Right lobe of liver (tissue), 6 donors: ENCODE measurements at regions of chr7 and their contacts with region 1.

Region 1: GRCh38 chr7:100059251-100059739 is 9.7 kb downstream of the ZSCAN21 start:
- DNase-seq: no peak
- ATAC-seq: no peak
- H3K4me3 ChIP-seq: no peak overlapping the region
- H3K27ac ChIP-seq: no peak overlapping the region
- H3K4me1 ChIP-seq: no peaks in the 10 kb centered on the region
- H3K27me3 ChIP-seq: no peaks in the 10 kb centered on the region
- CTCF ChIP-seq: no peak
- POLR2A ChIP-seq: no peak

Region 2: DNA sequence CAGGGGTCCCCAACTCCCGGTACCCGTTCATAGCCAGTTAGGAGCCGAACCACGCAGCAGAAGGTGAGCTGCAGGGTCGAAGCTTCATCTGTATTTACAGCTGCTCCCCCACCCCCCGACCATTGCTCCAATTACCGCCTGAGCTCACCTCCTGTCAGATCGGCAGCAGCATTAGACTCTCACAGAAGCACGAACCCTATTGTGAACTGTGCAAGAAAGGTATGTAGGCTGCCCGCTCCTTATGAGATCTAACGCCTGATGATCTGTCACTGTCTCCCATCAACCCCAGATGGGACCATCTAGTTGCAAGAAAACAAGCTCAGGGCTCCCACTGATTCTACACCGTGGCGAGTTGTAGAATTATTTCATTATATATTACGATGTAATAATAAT is 68.8 kb before region 1 on chr7:
- intact Hi-C with region 1: loop called in 1 of 2 experiments (anchors 5 kb)
- DNase-seq: peak in 1 of 3 donors; percentile 13
- ATAC-seq: peak in 3 of 4 donors; percentile 7 to 10 (median 7)
- H3K4me3 ChIP-seq: no peak overlapping the region
- H3K27ac ChIP-seq: no peak overlapping the region
- H3K4me1 ChIP-seq: peaks cover 0 to 16% (median 6%) of the 10 kb centered on the region in 4 donors
- H3K27me3 ChIP-seq: no peaks in the 10 kb centered on the region
- CTCF ChIP-seq: no peak
- POLR2A ChIP-seq: no peak

Region 3: DNA sequence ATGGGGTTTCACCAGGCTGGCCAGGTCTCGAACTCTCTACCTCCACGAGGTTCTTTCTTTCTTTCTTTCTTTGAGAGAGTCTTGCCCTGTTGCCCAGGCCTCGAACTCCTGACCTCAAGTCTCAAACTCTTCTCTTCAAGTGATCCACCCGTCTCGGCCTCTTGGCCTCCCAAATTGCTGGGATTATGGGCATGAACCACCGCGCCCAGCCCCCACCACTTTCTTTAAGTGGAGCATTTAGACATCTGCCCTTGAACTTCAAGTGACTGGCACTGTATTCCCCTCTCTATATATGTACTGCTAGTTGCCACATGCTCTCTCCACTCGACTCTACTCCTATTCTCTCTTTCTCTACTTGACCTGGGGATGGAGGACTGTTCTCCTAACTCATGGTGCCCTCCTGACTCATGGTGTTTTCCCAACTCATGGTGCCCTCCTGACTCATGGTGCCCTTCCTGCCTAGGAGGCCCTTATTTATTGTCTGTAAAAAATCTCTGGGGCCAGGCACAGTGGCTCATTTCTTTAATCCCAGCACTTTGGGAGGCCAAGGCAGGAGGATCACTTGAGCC is 855.7 kb after region 1 on chr7:
- intact Hi-C with region 1: no loop called
- DNase-seq: no peak
- ATAC-seq: peak in 1 of 4 donors; percentile 50
- H3K4me3 ChIP-seq: no peak overlapping the region
- H3K27ac ChIP-seq: peak overlapping the region; percentile 62 to 66 (median 65)
- H3K4me1 ChIP-seq: peaks cover 0 to 34% (median 14%) of the 10 kb centered on the region in 4 donors
- H3K27me3 ChIP-seq: no peaks in the 10 kb centered on the region
- CTCF ChIP-seq: no peak
- POLR2A ChIP-seq: no peak